Activated CD4-positive, alpha-beta T cell treated with anti-CD3 and anti-CD28 coated beads, Interleukin-2, amount 10 ng/mL, durations not matched to agents 7 days and 5 days (primary cell): ENCODE measurements at regions of chr15 and their contacts with region 1.

Region 1: DNA sequence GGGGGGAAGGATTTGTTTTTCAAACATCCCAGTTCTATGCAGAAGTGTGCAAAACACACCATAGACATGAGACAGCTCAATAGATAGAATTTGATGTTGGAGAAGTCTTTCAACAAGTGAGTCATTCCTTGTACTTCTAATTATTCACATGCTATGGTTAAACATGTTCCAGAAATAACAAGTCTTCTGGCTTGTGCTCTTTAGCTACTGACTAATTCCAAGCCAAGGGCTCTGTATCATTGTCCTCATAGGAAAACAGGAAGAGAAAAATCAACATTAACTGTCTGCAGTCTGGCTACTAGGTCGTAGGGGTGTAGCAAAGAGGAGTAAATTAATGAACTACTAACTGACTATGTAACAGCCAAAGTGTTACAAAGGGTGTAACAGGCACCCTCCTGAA is 25.8 kb downstream of the LDHAL6B start:
- DNase-seq: no peak
- H3K4me3 Mint-ChIP-seq: no peak overlapping the region
- H3K27ac Mint-ChIP-seq: no peak overlapping the region
- H3K4me1 Mint-ChIP-seq: peaks cover 3% of the 10 kb centered on the region
- H3K27me3 Mint-ChIP-seq: peaks cover 9% of the 10 kb centered on the region

Region 2: DNA sequence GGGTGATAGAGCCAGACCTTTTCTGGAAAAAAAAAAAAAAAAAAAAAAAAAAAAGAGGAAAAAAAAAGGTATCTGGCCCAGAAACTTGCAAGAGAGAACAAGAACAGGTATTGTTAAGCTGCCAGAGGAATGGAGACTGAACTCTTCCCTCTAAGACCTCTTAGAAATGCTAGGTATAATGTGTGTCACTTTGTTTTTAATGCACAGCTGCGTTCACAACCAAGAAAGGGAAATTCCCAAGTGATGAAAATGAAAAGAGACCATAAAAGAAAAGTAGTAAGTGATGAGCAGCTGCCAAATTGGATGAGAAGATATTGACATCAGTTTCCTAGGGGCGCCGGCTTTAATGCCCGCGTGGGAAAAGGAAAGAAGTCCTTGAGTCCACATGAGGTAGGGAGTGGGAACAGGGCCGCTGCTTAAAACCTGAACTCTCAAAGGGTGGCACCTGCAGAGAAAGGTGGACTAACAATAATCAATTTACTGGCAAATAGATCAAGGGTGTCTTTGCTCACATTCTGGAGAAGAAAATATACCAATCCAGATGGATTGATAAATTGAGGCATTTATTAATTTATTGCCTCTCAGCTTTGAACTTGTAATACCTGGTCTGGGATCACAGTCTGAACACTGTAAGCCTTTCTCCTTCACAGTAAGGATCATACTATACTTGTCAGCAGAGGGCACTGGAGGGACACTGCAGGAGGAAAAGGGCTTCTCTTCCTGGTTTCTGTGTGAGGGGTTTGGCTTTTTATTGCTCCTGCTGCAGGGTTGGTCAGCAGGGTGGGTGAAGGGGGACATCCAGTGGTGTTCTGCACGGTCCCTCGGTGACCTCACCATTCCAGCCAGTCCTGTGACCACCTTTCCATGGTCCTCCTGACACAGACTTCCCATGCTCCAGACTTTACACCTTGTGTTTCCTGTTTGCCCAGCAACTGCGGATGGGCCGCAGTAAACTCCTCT is 962.7 kb before region 1 on chr15:
- CTCF ChIA-PET with region 1: no interaction called
- POLR2A ChIA-PET with region 1: interaction called, 13 read pairs
- DNase-seq: peak; percentile 63
- H3K4me3 Mint-ChIP-seq: no peak overlapping the region
- H3K27ac Mint-ChIP-seq: no peak overlapping the region
- H3K4me1 Mint-ChIP-seq: peaks cover 10% of the 10 kb centered on the region
- H3K27me3 Mint-ChIP-seq: no peaks in the 10 kb centered on the region